Endothelial cell of umbilical vein (primary cell): ENCODE measurements at regions of chr1 and their contacts with region 1.

Region 1: DNA sequence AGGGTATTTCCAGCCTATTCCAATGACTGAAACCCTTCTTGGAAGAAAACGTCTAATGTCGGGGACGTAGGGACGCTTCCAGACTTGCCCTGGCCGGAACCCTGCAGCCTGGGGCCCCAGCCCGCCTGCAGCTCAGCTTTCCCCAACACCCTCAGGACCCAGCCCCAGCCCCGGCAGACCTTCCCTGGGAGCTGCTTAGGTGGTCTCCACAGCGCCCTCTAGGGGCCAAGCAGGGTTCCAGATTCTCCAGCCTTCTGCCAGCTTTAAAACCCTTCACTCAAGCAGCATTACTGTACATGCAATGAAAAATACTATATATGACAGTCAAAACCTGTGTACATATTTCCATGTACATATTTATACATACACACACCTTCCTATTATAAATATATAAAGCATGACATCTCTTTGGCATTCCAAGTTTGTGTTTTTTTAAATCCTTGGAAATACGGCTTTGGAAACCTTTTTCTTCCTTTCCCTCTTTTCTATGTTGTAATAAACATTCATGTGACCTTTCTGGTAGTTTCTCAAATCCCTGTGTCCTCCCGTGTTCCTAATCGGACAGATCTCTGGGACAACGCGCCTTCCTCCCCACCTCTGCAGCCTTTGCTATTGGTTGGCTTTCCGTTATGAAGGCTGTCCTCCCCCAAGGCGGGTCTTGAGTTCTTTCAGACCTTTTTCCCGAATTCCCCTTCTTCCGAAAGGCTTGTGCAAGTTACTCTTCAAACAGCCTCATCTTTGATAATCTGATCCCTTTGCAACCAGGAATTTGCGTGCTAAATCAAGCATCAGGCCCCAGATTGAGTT is 60.3 kb downstream of the STUM start:
- DNase-seq: peak; percentile 58
- H3K4me3 ChIP-seq: no peak overlapping the region
- H3K27ac ChIP-seq: no peak overlapping the region
- H3K4me1 ChIP-seq: no peaks in the 10 kb centered on the region
- H3K27me3 ChIP-seq: no peaks in the 10 kb centered on the region
- CTCF ChIP-seq: peak; percentile 85 to 89
- POLR2A ChIP-seq: no peak

Region 2: GRCh38 chr1:226424228-226425003 is 184.5 kb before region 1 on chr1:
- CTCF ChIA-PET with region 1: interaction called, 11 read pairs
- POLR2A ChIA-PET with region 1: no interaction called
- dilution Hi-C with region 1: no loop called
- intact Hi-C with region 1: loop called (anchors 1 kb)
- DNase-seq: peak; percentile 24
- H3K4me3 ChIP-seq: no peak overlapping the region
- H3K27ac ChIP-seq: no peak overlapping the region
- H3K4me1 ChIP-seq: no peaks in the 10 kb centered on the region
- H3K27me3 ChIP-seq: peaks cover 5 to 6% of the 10 kb centered on the region in 2 experiments
- CTCF ChIP-seq: peak; percentile 24 to 32
- POLR2A ChIP-seq: no peak

Region 3: GRCh38 chr1:226575739-226576378 is 33.0 kb before region 1 on chr1:
- CTCF ChIA-PET with region 1: interaction called, 3 read pairs
- POLR2A ChIA-PET with region 1: no interaction called
- dilution Hi-C with region 1: no loop called
- intact Hi-C with region 1: loop called (anchors 2 kb)
- DNase-seq: no peak
- H3K4me3 ChIP-seq: no peak overlapping the region
- H3K27ac ChIP-seq: no peak overlapping the region
- H3K4me1 ChIP-seq: no peaks in the 10 kb centered on the region
- H3K27me3 ChIP-seq: no peaks in the 10 kb centered on the region
- CTCF ChIP-seq: no peak
- POLR2A ChIP-seq: no peak

Region 4: DNA sequence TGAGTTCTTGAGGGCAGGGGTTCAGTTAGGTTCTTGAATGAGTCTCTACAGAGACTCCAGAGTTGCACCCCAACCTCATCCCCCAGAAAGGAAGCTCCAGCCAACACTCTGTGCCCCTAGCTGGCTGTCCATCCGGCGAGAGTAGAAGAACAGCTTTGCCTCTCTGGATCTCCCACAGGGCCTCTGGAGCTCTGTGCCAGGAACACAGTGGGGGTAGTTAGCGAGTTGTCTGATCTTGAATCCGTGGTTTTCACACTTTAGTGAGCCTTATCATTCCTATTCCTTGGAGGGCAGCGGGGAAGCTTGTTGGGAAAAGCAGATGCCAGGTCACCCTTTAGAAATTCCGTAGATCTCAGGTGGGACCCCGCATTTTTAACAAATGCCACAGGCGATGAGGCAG is 15.4 kb before region 1 on chr1:
- CTCF ChIA-PET with region 1: interaction called, 12 read pairs
- POLR2A ChIA-PET with region 1: no interaction called
- dilution Hi-C with region 1: no loop called
- intact Hi-C with region 1: no loop called
- DNase-seq: no peak
- H3K4me3 ChIP-seq: no peak overlapping the region
- H3K27ac ChIP-seq: no peak overlapping the region
- H3K4me1 ChIP-seq: no peaks in the 10 kb centered on the region
- H3K27me3 ChIP-seq: peaks cover 0 to 8% of the 10 kb centered on the region in 2 experiments
- CTCF ChIP-seq: no peak
- POLR2A ChIP-seq: no peak